Psoas muscle (tissue), 8 donors: ENCODE measurements at regions of chr15 and their contacts with region 1.

Region 1: DNA sequence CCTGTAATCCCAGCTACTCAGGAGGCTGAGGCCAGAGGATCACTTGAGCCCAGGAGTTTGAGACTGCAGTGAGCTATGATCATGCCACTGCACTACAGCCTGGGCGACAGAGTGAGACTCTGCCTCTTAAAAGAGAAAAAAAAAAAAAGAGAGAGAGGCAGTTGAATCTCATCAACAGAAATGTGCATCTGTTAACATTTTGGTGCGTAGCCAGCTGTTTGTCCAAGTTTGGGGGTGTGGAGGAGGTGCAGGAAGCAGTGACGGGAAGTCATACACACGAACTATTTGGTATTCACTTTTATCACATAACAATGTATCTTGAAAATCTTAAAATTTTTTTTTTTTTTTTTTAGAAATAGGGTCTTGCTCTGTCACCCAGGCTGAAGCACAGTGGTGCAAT is 18.2 kb upstream of the CEMIP start:
- DNase-seq: no peak
- ATAC-seq: no peak
- H3K4me3 ChIP-seq: no peak overlapping the region
- H3K27ac ChIP-seq: no peak overlapping the region
- H3K4me1 ChIP-seq: no peaks in the 10 kb centered on the region
- H3K27me3 ChIP-seq: peaks cover 0 to 3% (median 0%) of the 10 kb centered on the region in 3 donors
- CTCF ChIP-seq: no peak

Region 2: DNA sequence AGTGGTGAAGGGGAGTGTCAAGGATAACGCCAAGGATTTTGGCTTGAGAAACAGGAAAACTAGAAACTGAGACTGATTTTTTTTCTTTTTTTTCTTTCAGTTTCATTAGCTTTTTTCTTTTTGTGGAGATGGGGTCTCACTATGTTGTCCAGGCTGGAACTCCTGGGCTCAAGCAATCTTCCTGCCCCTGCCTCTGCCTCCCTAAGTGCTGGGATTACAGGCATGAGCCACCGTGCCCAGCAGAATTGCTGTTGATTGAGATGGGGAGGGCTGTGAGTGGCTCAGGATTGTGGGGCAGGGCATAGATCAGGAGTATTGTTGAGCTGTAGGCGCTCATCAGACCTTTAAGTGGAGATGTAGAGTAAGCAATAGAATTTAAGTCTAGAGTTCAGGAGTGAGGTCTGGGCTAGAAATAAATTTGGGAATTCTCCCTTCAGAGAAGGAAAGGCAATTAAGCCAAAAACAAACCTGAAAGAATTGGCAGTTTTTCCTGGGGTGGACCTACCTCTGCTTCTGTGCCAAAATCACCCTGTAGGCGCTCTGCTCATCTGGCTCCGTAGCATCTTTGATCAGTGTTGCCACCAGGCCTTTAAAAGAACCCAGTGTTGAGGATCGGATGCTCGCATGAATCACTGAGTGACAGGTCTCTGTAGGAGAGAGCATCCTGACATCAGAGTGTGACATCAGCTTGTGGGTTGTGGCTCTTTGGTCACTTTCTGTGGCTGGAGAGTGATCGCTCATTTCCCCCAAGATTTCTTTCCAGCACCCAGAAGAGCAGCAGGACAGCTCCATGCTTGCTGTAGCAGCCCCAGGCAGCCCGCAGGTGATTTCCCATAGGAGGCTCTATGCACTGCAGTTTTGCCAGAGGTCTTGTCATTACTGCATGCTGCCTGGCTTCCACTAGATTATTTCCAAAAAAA is 50.1 kb before region 1 on chr15:
- intact Hi-C with region 1: loop called in 1 of 2 experiments (anchors 5 kb)
- DNase-seq: no peak
- ATAC-seq: no peak
- H3K4me3 ChIP-seq: no peak overlapping the region
- H3K27ac ChIP-seq: no peak overlapping the region
- H3K4me1 ChIP-seq: no peaks in the 10 kb centered on the region
- H3K27me3 ChIP-seq: no peaks in the 10 kb centered on the region
- CTCF ChIP-seq: no peak